A673 (cell line): ENCODE measurements at regions of chr9 and their contacts with region 1.

Region 1: GRCh38 chr9:4750023-4750673 is 9.1 kb upstream of the AK3 start:
- DNase-seq: peak; percentile 72
- H3K4me3 ChIP-seq: no peak overlapping the region
- H3K27ac ChIP-seq: no peak overlapping the region
- H3K4me1 ChIP-seq: no peaks in the 10 kb centered on the region
- H3K27me3 ChIP-seq: no peaks in the 10 kb centered on the region
- CTCF ChIP-seq: peak; percentile 77

Region 2: GRCh38 chr9:4382722-4383317 is 367.3 kb before region 1 on chr9:
- CTCF ChIA-PET with region 1: no interaction called
- POLR2A ChIA-PET with region 1: no interaction called
- intact Hi-C with region 1: loop called (anchors 5 kb)
- DNase-seq: peak; percentile 63
- H3K4me3 ChIP-seq: no peak overlapping the region
- H3K27ac ChIP-seq: no peak overlapping the region
- H3K4me1 ChIP-seq: peaks cover 10% of the 10 kb centered on the region
- H3K27me3 ChIP-seq: no peaks in the 10 kb centered on the region
- CTCF ChIP-seq: peak; percentile 75

Region 3: DNA sequence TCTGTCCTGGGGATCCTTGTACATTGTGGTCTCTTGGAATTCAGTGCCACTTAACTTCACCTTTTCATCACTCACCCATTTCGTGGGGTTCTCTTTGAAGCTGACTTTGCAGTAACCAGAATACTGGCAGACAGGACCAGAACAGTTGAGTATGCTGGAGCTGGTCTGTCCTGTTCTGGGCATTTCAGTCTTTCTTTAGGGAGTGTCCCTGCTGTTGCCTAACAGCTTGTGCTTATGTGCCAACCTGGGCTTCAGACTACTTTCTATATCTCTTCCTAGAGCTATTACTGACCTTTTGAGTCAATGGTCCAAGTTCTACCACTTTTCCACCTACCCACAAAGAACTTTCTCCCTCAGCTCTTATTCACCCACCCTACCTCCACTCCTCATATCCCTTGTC is 445.3 kb after region 1 on chr9:
- CTCF ChIA-PET with region 1: no interaction called
- POLR2A ChIA-PET with region 1: no interaction called
- intact Hi-C with region 1: loop called (anchors 10 kb)
- DNase-seq: no peak
- H3K4me3 ChIP-seq: no peak overlapping the region
- H3K27ac ChIP-seq: no peak overlapping the region
- H3K4me1 ChIP-seq: no peaks in the 10 kb centered on the region
- H3K27me3 ChIP-seq: no peaks in the 10 kb centered on the region
- CTCF ChIP-seq: no peak

Region 4: GRCh38 chr9:5442400-5443011 is 692.4 kb after region 1 on chr9:
- CTCF ChIA-PET with region 1: no interaction called
- POLR2A ChIA-PET with region 1: no interaction called
- intact Hi-C with region 1: loop called (anchors 5 kb)
- DNase-seq: peak; percentile 61
- H3K4me3 ChIP-seq: no peak overlapping the region
- H3K27ac ChIP-seq: no peak overlapping the region
- H3K4me1 ChIP-seq: peaks cover 7% of the 10 kb centered on the region
- H3K27me3 ChIP-seq: no peaks in the 10 kb centered on the region
- CTCF ChIP-seq: peak; percentile 67